AG04449 (cell line): ENCODE measurements at regions of chr1 and their contacts with region 1.

Region 1: GRCh38 chr1:160098852-160099561 is 588 bp upstream of the IGSF8 start:
- DNase-seq: peak; percentile 29
- H3K4me3 ChIP-seq: peak overlapping the region; percentile 72
- CTCF ChIP-seq: no peak

Region 2: GRCh38 chr1:160061369-160062229 is 37.4 kb before region 1 on chr1:
- CTCF ChIA-PET with region 1: no interaction called
- POLR2A ChIA-PET with region 1: no interaction called
- DNase-seq: no peak
- H3K4me3 ChIP-seq: no peak overlapping the region
- CTCF ChIP-seq: no peak

Region 3: DNA sequence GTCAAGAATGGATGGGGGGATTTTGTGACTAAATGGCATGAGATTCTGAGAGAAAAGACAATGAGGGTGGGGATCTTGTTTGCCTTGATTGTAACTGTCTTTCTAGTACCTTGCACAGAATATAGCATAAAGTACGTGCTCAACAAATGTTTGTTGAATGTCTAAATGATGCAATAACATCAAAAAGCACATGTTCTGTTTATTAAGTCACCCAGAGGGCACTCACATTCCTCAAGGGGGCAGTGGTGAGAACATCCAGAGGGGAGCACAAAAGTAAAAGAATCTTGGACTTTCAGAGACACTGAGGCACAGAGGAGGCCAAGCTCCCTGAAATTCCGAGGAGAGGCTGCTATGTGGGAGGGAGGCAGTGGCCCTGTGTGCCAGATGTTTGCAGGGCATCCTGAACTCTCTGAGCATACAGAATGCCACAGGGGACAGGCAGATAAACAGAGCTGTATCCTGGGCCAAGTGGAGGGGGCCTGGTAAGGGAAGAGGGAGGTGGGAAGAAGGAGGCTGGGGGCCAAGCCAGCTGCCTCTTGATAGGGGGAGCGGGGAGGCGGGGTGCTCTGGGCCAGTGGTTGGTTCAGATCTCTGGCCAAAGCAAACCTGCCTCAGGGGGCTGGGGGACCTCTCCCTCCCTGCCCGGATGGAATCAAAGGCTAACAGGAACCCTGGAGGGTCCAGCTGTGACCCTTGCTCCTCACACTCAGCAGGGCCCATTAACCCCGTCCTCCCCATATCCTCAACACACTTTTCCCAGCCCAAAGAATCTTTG is 10.1 kb after region 1 on chr1:
- CTCF ChIA-PET with region 1: interaction called, 28 read pairs
- POLR2A ChIA-PET with region 1: no interaction called
- DNase-seq: no peak
- H3K4me3 ChIP-seq: no peak overlapping the region
- CTCF ChIP-seq: peak; percentile 35

Region 4: DNA sequence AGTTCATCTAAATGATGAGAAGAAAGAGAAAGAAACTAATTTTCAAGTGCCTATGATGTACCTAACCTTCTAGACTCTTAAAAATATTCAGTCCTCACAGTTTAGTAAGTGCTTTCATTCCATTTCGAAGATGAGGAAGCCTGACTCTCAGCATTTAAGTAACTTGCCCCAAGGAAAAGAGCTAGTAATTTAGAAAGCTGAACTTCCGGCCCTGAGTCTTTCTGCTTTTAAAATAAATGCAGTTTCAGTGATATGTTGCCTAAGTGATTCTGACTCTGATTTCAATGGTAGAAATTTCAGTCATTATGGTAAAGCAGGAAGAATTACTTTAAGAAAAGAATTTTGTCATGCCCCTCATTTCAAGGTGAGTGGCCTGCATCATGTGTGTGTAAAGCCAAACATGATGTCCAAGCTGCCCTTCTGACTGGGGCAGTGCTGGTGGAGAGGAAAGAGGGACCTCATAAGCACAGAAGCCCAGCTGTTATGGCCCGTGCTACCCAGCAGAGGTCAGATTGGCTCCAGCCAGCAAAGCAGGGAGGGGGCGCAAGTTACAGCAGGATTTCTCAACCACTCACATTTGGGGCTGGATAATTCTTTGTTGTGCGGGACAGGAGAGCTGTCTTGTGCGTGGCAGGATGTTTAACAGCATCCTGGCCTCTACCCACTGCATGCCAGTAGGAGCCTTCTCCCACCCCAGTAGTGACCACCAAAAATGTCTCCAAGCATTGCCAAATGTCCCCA is 63.1 kb after region 1 on chr1:
- CTCF ChIA-PET with region 1: interaction called, 11 read pairs
- POLR2A ChIA-PET with region 1: no interaction called
- DNase-seq: no peak
- H3K4me3 ChIP-seq: no peak overlapping the region
- CTCF ChIP-seq: peak; percentile 64

Region 5: DNA sequence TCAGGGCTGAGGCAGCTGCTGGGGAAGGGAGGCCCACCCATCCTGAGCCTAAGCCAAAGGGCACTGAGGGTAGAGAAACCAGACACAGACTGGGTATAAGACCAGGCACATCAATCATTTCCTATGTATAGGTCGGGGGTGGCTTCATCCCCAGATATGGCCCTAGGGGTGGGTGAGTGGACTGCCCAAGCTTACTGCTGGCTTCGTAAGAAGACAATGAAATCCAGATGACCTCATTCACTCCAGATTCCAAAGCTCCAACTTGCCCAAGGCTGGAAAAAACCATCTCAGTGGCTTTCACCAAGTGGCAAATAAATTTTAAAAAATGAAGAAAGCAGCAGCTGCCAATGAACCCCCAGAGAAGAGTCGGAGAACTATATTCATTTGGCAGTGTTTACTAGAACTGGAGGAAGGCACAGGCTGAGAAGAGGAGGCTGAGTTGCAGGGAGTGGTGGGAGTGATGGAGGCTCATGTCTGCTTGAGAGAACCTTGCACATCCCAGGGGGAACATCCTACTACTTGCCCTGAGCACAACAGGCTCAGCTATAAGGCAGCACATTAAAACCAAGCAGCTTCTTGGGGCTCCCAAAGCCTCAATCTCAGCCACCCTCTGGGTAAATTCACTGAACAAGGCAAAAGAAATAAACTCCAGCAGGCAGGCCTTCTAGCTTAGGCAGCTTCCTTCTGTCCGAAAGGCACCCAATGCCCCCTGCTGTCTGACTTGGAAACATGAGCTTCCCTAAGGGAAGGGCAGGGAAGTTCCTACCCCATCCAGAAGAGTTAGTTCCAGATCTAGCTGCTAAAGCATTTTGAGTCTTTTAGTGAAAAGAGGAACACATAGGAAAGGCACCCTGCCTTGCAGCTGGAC is 120.3 kb after region 1 on chr1:
- CTCF ChIA-PET with region 1: interaction called, 206 read pairs
- POLR2A ChIA-PET with region 1: interaction called, 7 read pairs
- DNase-seq: peak; percentile 36
- H3K4me3 ChIP-seq: no peak overlapping the region
- CTCF ChIP-seq: peak; percentile 79

Region 6: GRCh38 chr1:160261893-160262794 is 163.1 kb after region 1 on chr1 and contains the start of gene DCAF8:
- CTCF ChIA-PET with region 1: interaction called, 24 read pairs
- POLR2A ChIA-PET with region 1: no interaction called
- DNase-seq: peak; percentile 76
- H3K4me3 ChIP-seq: peak within 1 kb of the TSS; percentile 99
- CTCF ChIP-seq: no peak